ENCODE measurements at regions of chr17 and their contacts with region 1.

Region 1: DNA sequence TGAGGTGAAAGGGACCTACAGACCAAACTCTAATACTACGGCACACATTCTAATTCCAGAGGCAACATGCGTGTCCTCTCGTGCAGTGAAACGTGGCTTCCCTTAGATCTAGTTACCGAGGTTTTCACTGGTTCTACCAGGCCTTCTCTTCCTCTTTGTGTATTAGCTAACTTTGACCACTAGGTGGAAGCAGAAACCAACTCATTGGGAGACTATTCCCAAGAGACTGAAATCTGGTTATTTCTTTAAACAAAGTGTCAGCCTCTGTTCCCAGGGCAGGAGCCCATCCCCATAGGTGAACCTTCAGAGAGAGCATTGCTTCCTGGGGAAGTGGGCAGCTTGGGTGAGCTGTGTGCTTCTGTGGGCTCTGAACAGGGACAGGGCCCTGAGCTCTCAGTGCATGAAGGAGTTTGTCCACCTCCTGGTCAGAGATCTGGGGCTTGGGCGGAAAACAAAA is 19.7 kb upstream of the RCVRN start:
- H3K4me3 ChIP-seq: no peak overlapping the region
- H3K27ac ChIP-seq: no peak overlapping the region
- H3K4me1 ChIP-seq: peaks cover 6% of the 10 kb centered on the region; the same call in 1 of the 2 replicates
- CTCF ChIP-seq: peak; percentile 69

Region 2: DNA sequence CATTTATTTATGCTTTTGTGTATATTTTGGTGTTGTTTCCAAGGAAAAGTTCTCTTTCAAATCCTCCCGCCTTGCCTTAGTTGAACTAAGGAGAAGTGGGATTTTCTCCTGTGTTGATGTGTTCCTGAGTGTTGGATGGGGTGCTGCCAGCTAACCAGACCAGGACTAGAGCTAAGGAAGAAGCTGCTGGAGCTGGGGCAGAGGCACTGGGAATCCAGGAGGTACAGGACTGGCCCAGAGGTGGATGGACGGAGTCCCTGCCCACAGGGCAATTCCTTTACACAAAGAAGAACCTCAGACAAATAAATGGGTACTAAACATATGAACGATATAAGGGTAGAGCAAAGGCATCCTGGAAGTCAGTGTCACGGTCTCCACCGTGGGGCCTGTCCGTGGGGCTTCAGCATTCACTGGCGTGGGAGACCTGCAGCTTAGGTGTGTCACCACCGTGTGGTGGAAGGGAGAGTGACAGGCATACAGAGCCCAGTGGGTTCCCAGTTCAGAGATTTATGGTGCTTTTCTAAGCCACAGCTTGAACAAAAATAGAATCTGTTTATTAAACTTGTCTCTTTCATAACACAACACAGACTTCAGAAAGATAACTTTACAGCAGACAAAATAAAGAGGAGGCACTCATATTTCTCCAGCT is 632.7 kb before region 1 on chr17:
- CTCF ChIA-PET with region 1: no interaction called
- POLR2A ChIA-PET with region 1: no interaction called
- H3K4me3 ChIP-seq: no peak overlapping the region
- H3K27ac ChIP-seq: no peak overlapping the region
- H3K4me1 ChIP-seq: no peaks in the 10 kb centered on the region
- CTCF ChIP-seq: peak; percentile 47

Region 3: DNA sequence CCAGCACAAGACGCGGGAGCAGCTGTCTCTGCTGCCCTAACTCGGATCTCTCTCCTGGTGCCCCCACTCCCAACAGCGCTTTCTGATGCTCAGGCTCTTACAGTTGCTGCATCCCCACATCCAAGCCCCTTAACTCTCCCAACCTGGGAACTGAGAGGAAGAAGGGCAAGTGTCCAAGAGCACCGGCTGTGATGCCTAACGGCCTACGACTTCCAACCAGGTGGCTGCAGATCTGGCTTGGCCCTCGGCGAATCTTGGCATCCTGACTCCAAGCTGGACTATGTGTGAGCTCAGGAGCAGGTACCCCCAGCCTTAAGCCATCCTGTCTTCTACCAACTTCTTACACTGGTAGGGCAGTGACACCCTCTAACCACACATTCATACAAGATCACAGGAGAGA is 18.6 kb after region 1 on chr17:
- CTCF ChIA-PET with region 1: interaction called, 19 read pairs
- POLR2A ChIA-PET with region 1: interaction called, 3 read pairs
- H3K4me3 ChIP-seq: no peak overlapping the region
- H3K27ac ChIP-seq: no peak overlapping the region
- H3K4me1 ChIP-seq: no peaks in the 10 kb centered on the region; the same call in 1 of the 2 replicates
- CTCF ChIP-seq: no peak

Region 4: DNA sequence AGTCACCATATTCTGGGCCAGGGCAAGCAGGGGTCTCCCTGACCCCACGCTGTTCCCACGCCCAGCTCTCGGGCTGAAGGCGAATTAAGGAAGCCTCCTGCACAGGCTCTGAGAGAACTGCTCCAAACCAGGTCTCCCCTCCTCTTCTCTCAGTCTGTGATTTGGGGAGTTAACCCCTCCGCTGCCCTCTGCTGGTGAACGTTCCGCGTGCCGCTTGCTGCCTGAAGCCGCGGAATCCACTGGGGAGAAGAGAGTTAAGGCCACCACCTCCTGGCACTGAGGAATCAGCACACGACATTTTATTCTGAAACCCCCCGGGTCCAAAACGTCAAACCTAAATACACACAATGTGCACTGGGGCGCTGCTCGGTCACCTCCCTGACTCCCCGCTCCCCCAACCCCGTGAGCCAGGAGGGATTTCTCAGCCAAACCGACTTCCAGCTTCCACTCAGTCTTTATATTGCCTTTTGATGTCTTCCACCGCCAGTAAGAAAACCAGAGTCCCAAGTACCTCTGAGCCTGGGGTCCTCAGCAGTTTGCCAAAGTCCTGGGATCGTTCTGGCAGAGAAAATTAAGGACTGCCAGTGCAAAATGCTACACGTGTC is 34.7 kb after region 1 on chr17:
- CTCF ChIA-PET with region 1: interaction called, 93 read pairs
- POLR2A ChIA-PET with region 1: no interaction called
- H3K4me3 ChIP-seq: no peak overlapping the region
- H3K27ac ChIP-seq: no peak overlapping the region
- H3K4me1 ChIP-seq: no peaks in the 10 kb centered on the region
- CTCF ChIP-seq: peak; percentile 77

Region 5: GRCh38 chr17:9982159-9982558 is 57.4 kb after region 1 on chr17:
- CTCF ChIA-PET with region 1: interaction called, 95 read pairs
- POLR2A ChIA-PET with region 1: no interaction called
- H3K4me3 ChIP-seq: no peak overlapping the region
- H3K27ac ChIP-seq: no peak overlapping the region
- H3K4me1 ChIP-seq: no peaks in the 10 kb centered on the region; the same call in 1 of the 2 replicates
- CTCF ChIP-seq: peak; percentile 50; the same call in 1 of the 2 replicates

Region 6: DNA sequence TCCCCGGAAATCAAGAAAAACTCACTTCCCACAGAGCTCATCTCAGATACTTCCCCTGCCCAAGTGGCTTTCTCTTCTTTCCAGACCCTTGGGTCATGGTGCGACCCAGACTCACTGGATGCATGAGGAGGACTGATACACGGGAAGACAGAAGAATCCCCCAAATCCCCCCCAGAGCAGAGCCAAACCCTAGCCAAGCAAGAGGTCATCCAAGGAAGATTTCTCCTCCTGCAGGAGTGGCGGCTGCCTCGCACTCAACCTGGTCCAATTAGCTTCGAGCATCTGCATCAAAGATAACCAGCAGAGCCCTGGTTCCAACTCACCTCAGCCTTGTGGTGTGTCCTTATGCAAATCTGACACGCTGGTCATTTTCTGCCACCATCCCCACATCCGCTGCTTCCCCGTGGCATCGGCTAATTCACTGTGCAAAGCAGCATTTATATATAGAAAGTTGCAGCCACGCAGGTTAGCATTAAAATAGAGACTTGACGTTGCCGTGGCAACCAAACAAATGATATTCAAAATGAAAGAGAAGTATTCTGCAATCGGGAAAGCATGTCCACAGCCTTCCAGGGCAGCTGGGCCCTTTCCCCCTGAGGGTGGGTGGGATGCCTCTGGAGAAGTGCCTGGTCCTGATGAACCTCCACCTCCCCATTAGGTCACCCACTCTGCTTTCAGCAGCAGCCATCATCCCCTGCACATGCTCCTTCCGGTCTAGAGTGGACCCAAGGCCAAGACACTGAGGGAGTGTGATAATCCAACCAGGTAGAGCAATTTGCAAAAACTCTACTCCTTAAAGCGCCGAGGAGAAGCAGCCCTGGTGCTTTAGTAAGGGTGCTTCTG is 134.8 kb after region 1 on chr17:
- CTCF ChIA-PET with region 1: no interaction called
- POLR2A ChIA-PET with region 1: no interaction called
- H3K4me3 ChIP-seq: no peak overlapping the region
- H3K27ac ChIP-seq: no peak overlapping the region
- H3K4me1 ChIP-seq: no peaks in the 10 kb centered on the region
- CTCF ChIP-seq: no peak

Region 7: DNA sequence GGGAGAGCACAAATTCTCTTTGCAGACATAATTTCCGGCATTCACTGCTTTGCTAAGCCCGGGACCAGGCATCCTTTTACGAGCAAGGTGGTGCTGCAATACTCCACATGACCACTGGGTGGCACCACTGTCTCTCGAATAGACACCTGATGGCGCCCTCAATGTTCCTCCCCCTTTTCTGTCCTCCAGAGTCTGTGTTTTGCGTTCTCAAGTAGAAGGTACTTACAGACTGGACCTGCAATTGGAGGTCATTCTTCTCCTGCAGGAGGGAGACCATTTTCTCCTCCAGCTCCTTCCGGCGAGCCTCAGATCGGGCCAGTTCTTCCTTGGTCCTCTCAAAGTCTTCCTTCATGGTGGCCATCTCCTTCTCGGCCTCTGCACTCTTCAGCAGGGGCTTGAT is 402.9 kb after region 1 on chr17:
- CTCF ChIA-PET with region 1: interaction called, 10 read pairs
- POLR2A ChIA-PET with region 1: no interaction called
- H3K4me3 ChIP-seq: no peak overlapping the region
- H3K27ac ChIP-seq: no peak overlapping the region
- H3K4me1 ChIP-seq: no peaks in the 10 kb centered on the region
- CTCF ChIP-seq: peak; percentile 78

Measured in HEK293 (cell line).